Naive thymus-derived CD8-positive, alpha-beta T cell (primary cell): ENCODE measurements at regions of chr14 and their contacts with region 1.

Region 1: GRCh38 chr14:92106143-92106926 is at the start of gene ATXN3:
- DNase-seq: peak; percentile 92 to 98 (median 94)
- ATAC-seq: peak; percentile 91 to 94
- H3K4me3 Mint-ChIP-seq: peak within 1 kb of the TSS; percentile 90 to 100 (median 96)
- H3K27ac Mint-ChIP-seq: peak within 1 kb of the TSS; percentile 84 to 96 (median 94)
- H3K4me1 Mint-ChIP-seq: peaks cover 27 to 70% (median 67%) of the 10 kb centered on the region in 4 donors
- H3K27me3 Mint-ChIP-seq: no peaks in the 10 kb centered on the region
- polyA plus RNA-seq, gene ATXN3: 11.3 to 15.5 (median 14.3) TPM

Region 2: GRCh38 chr14:92121670-92122350 is 15.5 kb after region 1 on chr14 and contains the starts of genes CPSF2 and NDUFB1:
- POLR2A ChIA-PET with region 1: interaction called, 109 read pairs
- DNase-seq: peak; percentile 67 to 94 (median 84)
- ATAC-seq: peak; percentile 90
- H3K4me3 Mint-ChIP-seq: peak within 1 kb of the TSS; percentile 88 to 100 (median 98)
- H3K27ac Mint-ChIP-seq: peak within 1 kb of the TSS; percentile 97 to 100 (median 99)
- H3K4me1 Mint-ChIP-seq: peaks cover 20 to 68% (median 48%) of the 10 kb centered on the region in 4 donors
- H3K27me3 Mint-ChIP-seq: no peaks in the 10 kb centered on the region
- polyA plus RNA-seq, gene CPSF2: 28.3 to 30.7 (median 29.5) TPM
- polyA plus RNA-seq, gene NDUFB1: 331 to 412 (median 399) TPM